ENCODE measurements at regions of chr22 and their contacts with region 1.

Region 1: DNA sequence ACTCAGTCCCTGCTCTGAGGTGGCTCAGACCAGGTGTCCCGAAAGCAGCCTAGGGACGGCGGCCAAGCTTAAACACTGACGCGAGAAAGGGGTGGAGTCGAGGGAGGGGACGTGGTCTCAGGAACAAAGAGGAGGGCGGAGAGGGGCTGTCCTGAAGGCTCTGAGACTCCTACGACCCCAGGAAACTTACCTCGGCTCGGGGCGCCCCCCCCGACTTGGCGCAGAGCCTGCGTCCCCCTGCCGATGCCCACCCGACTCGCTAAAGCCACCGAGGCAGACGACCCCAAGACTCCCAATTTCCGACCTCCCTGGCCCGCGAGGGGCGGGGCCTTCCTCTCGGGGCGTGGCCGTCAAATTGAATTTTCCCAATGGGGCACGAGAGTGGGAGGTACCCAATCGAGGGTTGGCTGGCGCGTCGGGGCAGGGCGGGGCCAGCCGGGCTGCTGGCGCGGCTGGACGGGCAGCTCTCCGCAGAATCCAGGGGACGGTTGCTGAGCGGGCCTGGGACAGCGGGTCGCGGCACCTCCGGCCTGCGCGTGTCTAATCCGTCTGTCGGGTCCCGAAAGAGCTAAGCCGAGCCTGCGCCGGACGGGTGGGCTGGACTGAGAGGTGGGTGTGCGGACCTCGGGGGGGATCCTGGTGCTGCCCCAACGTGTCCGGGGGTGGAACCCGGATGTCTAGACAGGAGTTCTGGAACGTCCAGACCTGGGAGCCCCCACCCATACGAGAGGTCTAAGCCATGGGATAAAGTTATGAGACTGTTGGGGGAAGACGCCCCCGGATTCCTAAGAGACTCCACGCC is at the start of gene SMTN:
- DNase-seq: peak; percentile 75 to 94 (median 90)
- ATAC-seq: peak; percentile 72
- H3K4me3 ChIP-seq: peak within 1 kb of the TSS; percentile 73 to 81
- H3K4me3 Mint-ChIP-seq: peak within 1 kb of the TSS; percentile 88
- H3K27ac ChIP-seq: no peak within 1 kb of the TSS
- H3K27ac Mint-ChIP-seq: peak within 1 kb of the TSS; percentile 37
- H3K4me1 ChIP-seq: peaks cover 32% of the 10 kb centered on the region
- H3K4me1 Mint-ChIP-seq: peaks cover 36% of the 10 kb centered on the region
- H3K27me3 ChIP-seq: no peaks in the 10 kb centered on the region
- H3K27me3 Mint-ChIP-seq: no peaks in the 10 kb centered on the region
- CTCF ChIP-seq: no peak
- total RNA-seq, gene SMTN: 4.0 to 4.9 TPM

Region 2: DNA sequence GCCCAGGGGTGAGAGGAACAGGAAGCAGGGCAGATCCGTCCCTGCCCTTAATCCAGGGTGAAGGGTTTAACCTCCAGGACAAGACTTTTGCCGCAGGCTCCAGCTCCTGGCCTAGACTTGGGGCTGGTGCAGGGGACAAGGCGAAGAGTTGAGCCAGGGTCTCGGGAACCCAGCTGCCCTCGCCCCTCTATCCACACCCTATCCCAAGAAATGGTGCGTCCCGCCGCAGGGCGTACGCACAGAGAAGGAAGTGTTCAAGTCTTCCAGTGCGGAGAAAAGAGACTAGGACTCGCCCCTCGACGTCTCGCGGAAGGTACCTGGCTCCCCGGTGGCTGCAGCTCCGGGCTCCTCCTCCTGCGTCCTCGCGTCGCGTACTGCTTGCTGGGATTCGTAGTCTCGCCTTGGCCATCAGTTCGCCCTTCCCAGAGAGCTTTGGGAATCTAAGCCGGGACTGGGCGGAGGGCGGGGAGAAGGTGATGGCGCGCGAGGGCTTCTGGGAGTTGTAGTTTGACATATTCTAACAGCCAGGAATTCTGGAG is 1314.3 kb before region 1 on chr22 and contains the start of gene ZMAT5:
- CTCF ChIA-PET with region 1: no interaction called
- POLR2A ChIA-PET with region 1: no interaction called
- intact Hi-C with region 1: loop called in 1 of 2 experiments (anchors 5 kb)
- DNase-seq: peak; percentile 77 to 97 (median 92)
- ATAC-seq: peak; percentile 94
- H3K4me3 ChIP-seq: peak within 1 kb of the TSS; percentile 83 to 95
- H3K4me3 Mint-ChIP-seq: peak within 1 kb of the TSS; percentile 100
- H3K27ac ChIP-seq: peak within 1 kb of the TSS; percentile 72 to 84
- H3K27ac Mint-ChIP-seq: peak within 1 kb of the TSS; percentile 98
- H3K4me1 ChIP-seq: peaks cover 23% of the 10 kb centered on the region
- H3K4me1 Mint-ChIP-seq: peaks cover 41% of the 10 kb centered on the region
- H3K27me3 ChIP-seq: no peaks in the 10 kb centered on the region
- H3K27me3 Mint-ChIP-seq: no peaks in the 10 kb centered on the region
- CTCF ChIP-seq: no peak
- total RNA-seq, gene ZMAT5: 4.3 to 5.2 TPM

Region 3: GRCh38 chr22:30591588-30592359 is 489.3 kb before region 1 on chr22 and contains the start of gene PES1:
- CTCF ChIA-PET with region 1: no interaction called
- POLR2A ChIA-PET with region 1: no interaction called
- intact Hi-C with region 1: loop called in 1 of 2 experiments (anchors 5 kb)
- DNase-seq: peak; percentile 90 to 99 (median 95)
- ATAC-seq: peak; percentile 96
- H3K4me3 ChIP-seq: peak within 1 kb of the TSS; percentile 79 to 80
- H3K4me3 Mint-ChIP-seq: no peak within 1 kb of the TSS
- H3K27ac ChIP-seq: peak within 1 kb of the TSS; percentile 89 to 97
- H3K27ac Mint-ChIP-seq: no peak within 1 kb of the TSS
- H3K4me1 ChIP-seq: peaks cover 15% of the 10 kb centered on the region
- H3K4me1 Mint-ChIP-seq: no peaks in the 10 kb centered on the region
- H3K27me3 ChIP-seq: no peaks in the 10 kb centered on the region
- H3K27me3 Mint-ChIP-seq: peaks cover 13% of the 10 kb centered on the region
- CTCF ChIP-seq: no peak
- total RNA-seq, gene PES1: 39.7 to 47.0 TPM

Region 4: DNA sequence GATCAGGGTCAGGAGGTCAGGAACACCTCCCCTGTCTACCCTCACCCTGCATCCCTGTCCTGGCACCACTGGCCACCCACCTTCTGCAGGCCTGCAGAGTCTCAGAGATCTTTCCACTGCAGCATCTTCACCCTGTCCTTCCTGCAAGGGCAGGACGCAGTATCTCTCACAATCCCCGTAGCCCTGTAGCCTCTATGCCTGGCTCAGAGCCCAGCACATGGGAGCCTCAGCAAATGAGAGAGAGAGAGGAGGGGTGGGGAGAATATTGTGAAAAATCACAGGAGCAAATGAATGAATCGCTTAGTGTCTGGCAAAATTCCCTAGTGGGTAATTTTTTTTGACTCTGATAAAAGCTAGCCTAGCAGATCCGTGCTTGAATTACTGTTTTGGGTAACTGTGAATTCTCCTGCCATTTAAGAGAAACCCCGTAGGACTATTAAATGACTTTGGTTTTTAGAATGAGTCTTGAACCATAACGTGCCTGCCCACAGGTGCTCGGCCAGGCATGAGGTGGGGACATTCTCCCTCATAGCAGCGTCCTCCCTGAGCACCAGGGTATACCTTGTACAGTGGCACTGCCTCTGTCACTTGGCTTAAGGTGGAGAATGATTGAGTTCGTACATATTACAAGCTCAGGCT is 204.0 kb before region 1 on chr22:
- CTCF ChIA-PET with region 1: no interaction called
- POLR2A ChIA-PET with region 1: no interaction called
- intact Hi-C with region 1: no loop called
- DNase-seq: no peak
- ATAC-seq: no peak
- H3K4me3 ChIP-seq: no peak overlapping the region
- H3K4me3 Mint-ChIP-seq: no peak overlapping the region
- H3K27ac ChIP-seq: no peak overlapping the region
- H3K27ac Mint-ChIP-seq: no peak overlapping the region
- H3K4me1 ChIP-seq: no peaks in the 10 kb centered on the region
- H3K4me1 Mint-ChIP-seq: no peaks in the 10 kb centered on the region
- H3K27me3 ChIP-seq: no peaks in the 10 kb centered on the region
- H3K27me3 Mint-ChIP-seq: no peaks in the 10 kb centered on the region
- CTCF ChIP-seq: no peak

Region 5: GRCh38 chr22:30920407-30920806 is 160.6 kb before region 1 on chr22:
- CTCF ChIA-PET with region 1: interaction called, 11 read pairs
- POLR2A ChIA-PET with region 1: interaction called, 6 read pairs
- intact Hi-C with region 1: loop called in 1 of 2 experiments (anchors 1 kb)
- DNase-seq: peak; percentile 66 to 91 (median 86)
- ATAC-seq: peak; percentile 77
- H3K4me3 ChIP-seq: no peak overlapping the region
- H3K4me3 Mint-ChIP-seq: peak overlapping the region; percentile 64
- H3K27ac ChIP-seq: no peak overlapping the region
- H3K27ac Mint-ChIP-seq: peak overlapping the region; percentile 55
- H3K4me1 ChIP-seq: peaks cover 26% of the 10 kb centered on the region
- H3K4me1 Mint-ChIP-seq: peaks cover 31% of the 10 kb centered on the region
- H3K27me3 ChIP-seq: no peaks in the 10 kb centered on the region
- H3K27me3 Mint-ChIP-seq: no peaks in the 10 kb centered on the region
- CTCF ChIP-seq: peak; percentile 96

Region 6: GRCh38 chr22:31096657-31097279 is 15.7 kb after region 1 on chr22:
- CTCF ChIA-PET with region 1: interaction called, 17 read pairs
- POLR2A ChIA-PET with region 1: interaction called, 3 read pairs
- intact Hi-C with region 1: no loop called
- DNase-seq: no peak
- ATAC-seq: no peak
- H3K4me3 ChIP-seq: no peak overlapping the region
- H3K4me3 Mint-ChIP-seq: no peak overlapping the region
- H3K27ac ChIP-seq: no peak overlapping the region
- H3K27ac Mint-ChIP-seq: no peak overlapping the region
- H3K4me1 ChIP-seq: no peaks in the 10 kb centered on the region
- H3K4me1 Mint-ChIP-seq: no peaks in the 10 kb centered on the region
- H3K27me3 ChIP-seq: no peaks in the 10 kb centered on the region
- H3K27me3 Mint-ChIP-seq: no peaks in the 10 kb centered on the region
- CTCF ChIP-seq: no peak

Region 7: GRCh38 chr22:31148953-31149627 is 68.0 kb after region 1 on chr22:
- CTCF ChIA-PET with region 1: no interaction called
- POLR2A ChIA-PET with region 1: no interaction called
- intact Hi-C with region 1: no loop called
- DNase-seq: peak in 5 of 9 experiments; percentile 16 to 53 (median 40)
- ATAC-seq: peak; percentile 56
- H3K4me3 ChIP-seq: no peak overlapping the region
- H3K4me3 Mint-ChIP-seq: no peak overlapping the region
- H3K27ac ChIP-seq: no peak overlapping the region
- H3K27ac Mint-ChIP-seq: no peak overlapping the region
- H3K4me1 ChIP-seq: no peaks in the 10 kb centered on the region
- H3K4me1 Mint-ChIP-seq: no peaks in the 10 kb centered on the region
- H3K27me3 ChIP-seq: no peaks in the 10 kb centered on the region
- H3K27me3 Mint-ChIP-seq: peaks cover 3% of the 10 kb centered on the region
- CTCF ChIP-seq: no peak

Region 8: GRCh38 chr22:31230871-31231621 is 150.0 kb after region 1 on chr22:
- CTCF ChIA-PET with region 1: interaction called, 21 read pairs
- POLR2A ChIA-PET with region 1: no interaction called
- intact Hi-C with region 1: loop called (anchors 1 to 2 kb)
- DNase-seq: peak; percentile 16 to 80 (median 56)
- ATAC-seq: peak; percentile 87
- H3K4me3 ChIP-seq: no peak overlapping the region
- H3K4me3 Mint-ChIP-seq: no peak overlapping the region
- H3K27ac ChIP-seq: peak overlapping the region in 1 of 2 experiments; percentile 40
- H3K27ac Mint-ChIP-seq: peak overlapping the region; percentile 92
- H3K4me1 ChIP-seq: peaks cover 25% of the 10 kb centered on the region
- H3K4me1 Mint-ChIP-seq: peaks cover 32% of the 10 kb centered on the region
- H3K27me3 ChIP-seq: no peaks in the 10 kb centered on the region
- H3K27me3 Mint-ChIP-seq: no peaks in the 10 kb centered on the region
- CTCF ChIP-seq: peak; percentile 69

Region 9: GRCh38 chr22:31661851-31662656 is 581.0 kb after region 1 on chr22 and contains the start of gene PISD:
- CTCF ChIA-PET with region 1: no interaction called
- POLR2A ChIA-PET with region 1: no interaction called
- intact Hi-C with region 1: loop called in 1 of 2 experiments (anchors 2 kb)
- DNase-seq: peak; percentile 94 to 98 (median 97)
- ATAC-seq: peak; percentile 94
- H3K4me3 ChIP-seq: peak within 1 kb of the TSS; percentile 89 to 97
- H3K4me3 Mint-ChIP-seq: peak within 1 kb of the TSS; percentile 96
- H3K27ac ChIP-seq: peak within 1 kb of the TSS; percentile 73 to 79
- H3K27ac Mint-ChIP-seq: peak within 1 kb of the TSS; percentile 96
- H3K4me1 ChIP-seq: peaks cover 18% of the 10 kb centered on the region
- H3K4me1 Mint-ChIP-seq: peaks cover 41% of the 10 kb centered on the region
- H3K27me3 ChIP-seq: no peaks in the 10 kb centered on the region
- H3K27me3 Mint-ChIP-seq: no peaks in the 10 kb centered on the region
- CTCF ChIP-seq: no peak
- total RNA-seq, gene PISD: 41.2 to 43.6 TPM

Measured in CD8-positive, alpha-beta T cell (primary cell).